Caco-2 (cell line): ENCODE measurements at regions of chr15 and their contacts with region 1.

Region 1: GRCh38 chr15:83066734-83067637 is at the start of gene BTBD1:
- DNase-seq: peak; percentile 92 to 95
- H3K4me3 ChIP-seq: peak within 1 kb of the TSS; percentile 81
- H3K4me3 Mint-ChIP-seq: peak within 1 kb of the TSS; percentile 75
- H3K27ac Mint-ChIP-seq: peak within 1 kb of the TSS; percentile 55
- H3K4me1 ChIP-seq: peaks cover 35% of the 10 kb centered on the region
- H3K4me1 Mint-ChIP-seq: peaks cover 10% of the 10 kb centered on the region
- H3K27me3 ChIP-seq: no peaks in the 10 kb centered on the region
- H3K27me3 Mint-ChIP-seq: no peaks in the 10 kb centered on the region
- CTCF ChIP-seq: no peak
- total RNA-seq, gene BTBD1: 34.1 and 36.1 TPM in 2 replicates

Region 2: GRCh38 chr15:83011271-83012075 is 55.5 kb before region 1 on chr15 and contains the start of gene C15orf40:
- CTCF ChIA-PET with region 1: interaction called, 3 read pairs
- POLR2A ChIA-PET with region 1: interaction called, 5 read pairs
- intact Hi-C with region 1: loop called (anchors 5 kb)
- DNase-seq: peak; percentile 90 to 92
- H3K4me3 ChIP-seq: peak within 1 kb of the TSS; percentile 76
- H3K4me3 Mint-ChIP-seq: peak within 1 kb of the TSS; percentile 88
- H3K27ac Mint-ChIP-seq: peak within 1 kb of the TSS; percentile 67
- H3K4me1 ChIP-seq: peaks cover 6% of the 10 kb centered on the region
- H3K4me1 Mint-ChIP-seq: peaks cover 19% of the 10 kb centered on the region
- H3K27me3 ChIP-seq: no peaks in the 10 kb centered on the region
- H3K27me3 Mint-ChIP-seq: no peaks in the 10 kb centered on the region
- CTCF ChIP-seq: peak in 1 of 2 experiments; percentile 81
- total RNA-seq, gene C15orf40: 26.8 and 27.2 TPM in 2 replicates

Region 3: DNA sequence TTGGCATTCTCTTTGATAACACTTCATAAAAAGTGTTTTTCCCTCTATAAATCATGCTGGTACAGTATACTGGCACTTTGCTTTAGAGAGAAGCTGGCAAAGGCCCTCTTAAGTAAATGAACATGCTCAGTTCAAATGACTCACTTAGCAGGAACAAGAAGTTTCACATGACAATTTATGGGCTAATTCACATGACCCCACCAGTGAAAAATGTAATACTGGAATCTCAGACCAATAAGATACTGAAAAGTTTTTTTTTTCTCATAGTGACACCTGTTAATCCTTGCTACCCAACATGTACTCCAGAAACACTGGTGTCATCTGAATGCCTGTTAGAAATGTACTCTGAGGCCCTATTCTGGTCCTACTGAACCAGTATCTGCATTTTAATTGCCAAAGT is 13.8 kb before region 1 on chr15:
- CTCF ChIA-PET with region 1: no interaction called
- POLR2A ChIA-PET with region 1: interaction called, 12 read pairs
- intact Hi-C with region 1: no loop called
- DNase-seq: no peak
- H3K4me3 ChIP-seq: no peak overlapping the region
- H3K4me3 Mint-ChIP-seq: no peak overlapping the region
- H3K27ac Mint-ChIP-seq: no peak overlapping the region
- H3K4me1 ChIP-seq: no peaks in the 10 kb centered on the region
- H3K4me1 Mint-ChIP-seq: no peaks in the 10 kb centered on the region
- H3K27me3 ChIP-seq: no peaks in the 10 kb centered on the region
- H3K27me3 Mint-ChIP-seq: no peaks in the 10 kb centered on the region
- CTCF ChIP-seq: no peak

Region 4: GRCh38 chr15:83283138-83283812 is 216.3 kb after region 1 on chr15:
- CTCF ChIA-PET with region 1: no interaction called
- POLR2A ChIA-PET with region 1: no interaction called
- intact Hi-C with region 1: no loop called
- DNase-seq: no peak
- H3K4me3 ChIP-seq: no peak overlapping the region
- H3K4me3 Mint-ChIP-seq: no peak overlapping the region
- H3K27ac Mint-ChIP-seq: no peak overlapping the region
- H3K4me1 ChIP-seq: peaks cover 28% of the 10 kb centered on the region
- H3K4me1 Mint-ChIP-seq: peaks cover 12% of the 10 kb centered on the region
- H3K27me3 ChIP-seq: no peaks in the 10 kb centered on the region
- H3K27me3 Mint-ChIP-seq: no peaks in the 10 kb centered on the region
- CTCF ChIP-seq: no peak